CD4-positive, alpha-beta memory T cell (primary cell): ENCODE measurements at regions of chr9 and their contacts with region 1.

Region 1: DNA sequence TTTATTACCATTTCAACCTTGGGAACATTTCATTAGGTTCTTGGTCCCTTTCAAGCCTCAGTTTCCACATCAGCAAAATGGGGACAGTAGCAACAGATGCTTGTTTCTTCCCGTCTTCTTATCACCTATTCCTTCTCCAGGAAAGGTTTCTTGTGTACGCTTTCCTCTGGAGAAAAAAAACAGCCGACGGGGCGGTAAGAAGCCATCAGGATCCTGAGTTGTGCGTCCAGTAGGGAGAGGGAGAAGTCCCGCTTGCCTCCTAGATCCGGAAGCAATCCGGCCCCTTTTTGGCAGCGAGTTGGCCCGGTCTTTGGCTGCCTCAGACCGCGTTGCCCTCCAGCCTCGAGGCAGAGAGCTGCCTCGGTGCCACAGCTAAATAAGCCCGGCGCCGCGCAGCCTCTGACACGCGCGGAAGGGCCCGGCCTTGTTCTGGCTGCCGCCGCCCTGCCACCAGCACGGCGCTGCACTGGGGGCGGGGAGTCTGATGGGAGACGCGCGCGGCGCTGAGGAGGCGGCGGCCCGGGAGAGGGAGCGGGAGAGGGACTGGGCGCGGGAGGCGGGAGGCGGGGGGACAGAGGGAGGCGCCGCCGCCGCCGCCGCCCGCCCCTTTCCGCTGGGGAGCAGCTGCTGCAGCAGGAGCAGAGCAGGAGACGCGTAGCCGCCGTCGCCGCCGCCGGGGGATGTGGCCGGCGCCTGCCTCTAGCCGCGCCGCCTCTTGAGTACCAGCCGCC is at the start of gene SLC44A1:
- DNase-seq: peak; percentile 92 to 94 (median 93)
- H3K4me3 ChIP-seq: peak within 1 kb of the TSS; percentile 18 to 71
- H3K4me3 Mint-ChIP-seq: peak within 1 kb of the TSS; percentile 89 to 95 (median 92)
- H3K27ac ChIP-seq: peak within 1 kb of the TSS; percentile 67
- H3K27ac Mint-ChIP-seq: peak within 1 kb of the TSS; percentile 89 to 96 (median 92)
- H3K4me1 ChIP-seq: peaks cover 20% of the 10 kb centered on the region
- H3K4me1 Mint-ChIP-seq: peaks cover 8 to 49% (median 20%) of the 10 kb centered on the region in 4 donors
- H3K27me3 ChIP-seq: no peaks in the 10 kb centered on the region
- H3K27me3 Mint-ChIP-seq: peaks cover 4% of the 10 kb centered on the region in 2 donors
- total RNA-seq, gene SLC44A1: 13.7 to 15.2 TPM

Region 2: GRCh38 chr9:104747558-104748358 is 496.4 kb before region 1 on chr9 and contains the start of gene NIPSNAP3A:
- CTCF ChIA-PET with region 1: interaction called, 3 read pairs
- POLR2A ChIA-PET with region 1: interaction called, 30 read pairs
- intact Hi-C with region 1: loop called (anchors 1 kb)
- DNase-seq: peak; percentile 85 to 95 (median 90)
- H3K4me3 ChIP-seq: peak within 1 kb of the TSS; percentile 56 to 89
- H3K4me3 Mint-ChIP-seq: peak within 1 kb of the TSS; percentile 91 to 99 (median 98)
- H3K27ac ChIP-seq: peak within 1 kb of the TSS; percentile 85
- H3K27ac Mint-ChIP-seq: peak within 1 kb of the TSS; percentile 90 to 99 (median 99)
- H3K4me1 ChIP-seq: peaks cover 15% of the 10 kb centered on the region
- H3K4me1 Mint-ChIP-seq: peaks cover 10 to 21% (median 17%) of the 10 kb centered on the region in 4 donors
- H3K27me3 ChIP-seq: no peaks in the 10 kb centered on the region
- H3K27me3 Mint-ChIP-seq: no peaks in the 10 kb centered on the region
- total RNA-seq, gene NIPSNAP3A: 11.3 to 13.6 TPM

Region 3: DNA sequence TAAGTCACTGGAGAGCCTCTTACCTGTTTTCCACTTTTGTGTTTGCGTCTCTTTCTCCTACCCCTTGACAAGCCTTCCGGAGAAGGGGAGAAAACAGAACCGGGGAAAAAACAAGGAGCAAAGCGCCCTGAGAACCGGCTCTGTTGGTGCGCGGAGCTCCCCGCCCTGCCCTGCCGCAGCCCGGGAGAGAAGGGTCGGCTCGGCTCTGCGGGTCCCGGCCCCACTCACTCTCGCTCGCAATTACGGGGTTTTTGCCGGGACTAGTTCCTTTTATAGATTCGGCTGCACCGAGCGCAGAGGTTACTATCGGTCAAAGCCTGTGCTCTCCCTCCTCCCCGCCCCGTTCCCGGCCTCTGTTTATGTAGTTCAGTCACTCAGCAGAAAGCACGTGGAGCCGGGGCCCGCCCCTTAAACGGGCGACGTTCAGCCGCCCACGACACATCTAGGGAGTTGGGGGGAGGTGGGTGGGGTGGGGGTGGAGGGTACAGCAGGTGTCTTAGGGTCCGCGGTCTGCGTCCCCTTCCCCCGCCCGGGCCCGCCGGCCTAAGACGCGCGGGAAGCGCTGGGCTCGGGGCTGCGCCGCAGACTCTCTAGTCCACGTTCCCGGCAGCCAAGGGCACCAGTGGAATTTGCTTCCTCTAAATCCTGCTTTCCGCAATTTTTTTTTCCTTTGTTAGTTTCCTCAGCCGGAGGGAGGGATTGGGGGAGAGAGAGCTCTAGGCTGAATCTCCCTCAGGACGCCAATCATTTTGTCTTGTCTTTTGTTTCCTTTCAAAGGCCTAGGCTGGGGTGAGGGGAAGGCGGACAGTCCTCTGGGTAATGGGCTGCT is 316.0 kb before region 1 on chr9 and contains the start of gene ABCA1:
- CTCF ChIA-PET with region 1: no interaction called
- POLR2A ChIA-PET with region 1: interaction called, 11 read pairs
- intact Hi-C with region 1: loop called (anchors 2 kb)
- DNase-seq: peak; percentile 56 to 83 (median 65)
- H3K4me3 ChIP-seq: peak within 1 kb of the TSS; percentile 62 to 69
- H3K4me3 Mint-ChIP-seq: peak within 1 kb of the TSS; percentile 90 to 94 (median 91)
- H3K27ac ChIP-seq: no peak within 1 kb of the TSS
- H3K27ac Mint-ChIP-seq: peak within 1 kb of the TSS in 6 of 7 donors; percentile 60 to 92 (median 80)
- H3K4me1 ChIP-seq: peaks cover 23% of the 10 kb centered on the region
- H3K4me1 Mint-ChIP-seq: peaks cover 4 to 19% (median 10%) of the 10 kb centered on the region in 4 donors
- H3K27me3 ChIP-seq: no peaks in the 10 kb centered on the region
- H3K27me3 Mint-ChIP-seq: peaks cover 0 to 14% of the 10 kb centered on the region in 2 donors
- total RNA-seq, gene ABCA1: 0.80 to 1.2 TPM

Region 4: GRCh38 chr9:104991144-104991953 is 252.8 kb before region 1 on chr9:
- CTCF ChIA-PET with region 1: no interaction called
- POLR2A ChIA-PET with region 1: interaction called, 9 read pairs
- intact Hi-C with region 1: loop called (anchors 5 kb)
- DNase-seq: peak; percentile 85 to 88 (median 88)
- H3K4me3 ChIP-seq: peak overlapping the region; percentile 94 to 98
- H3K4me3 Mint-ChIP-seq: peak overlapping the region; percentile 87 to 94 (median 92)
- H3K27ac ChIP-seq: peak overlapping the region; percentile 76
- H3K27ac Mint-ChIP-seq: peak overlapping the region; percentile 96 to 99 (median 98)
- H3K4me1 ChIP-seq: peaks cover 38% of the 10 kb centered on the region
- H3K4me1 Mint-ChIP-seq: peaks cover 21 to 45% (median 33%) of the 10 kb centered on the region in 4 donors
- H3K27me3 ChIP-seq: no peaks in the 10 kb centered on the region
- H3K27me3 Mint-ChIP-seq: peaks cover 0 to 1% of the 10 kb centered on the region in 2 donors

Region 5: DNA sequence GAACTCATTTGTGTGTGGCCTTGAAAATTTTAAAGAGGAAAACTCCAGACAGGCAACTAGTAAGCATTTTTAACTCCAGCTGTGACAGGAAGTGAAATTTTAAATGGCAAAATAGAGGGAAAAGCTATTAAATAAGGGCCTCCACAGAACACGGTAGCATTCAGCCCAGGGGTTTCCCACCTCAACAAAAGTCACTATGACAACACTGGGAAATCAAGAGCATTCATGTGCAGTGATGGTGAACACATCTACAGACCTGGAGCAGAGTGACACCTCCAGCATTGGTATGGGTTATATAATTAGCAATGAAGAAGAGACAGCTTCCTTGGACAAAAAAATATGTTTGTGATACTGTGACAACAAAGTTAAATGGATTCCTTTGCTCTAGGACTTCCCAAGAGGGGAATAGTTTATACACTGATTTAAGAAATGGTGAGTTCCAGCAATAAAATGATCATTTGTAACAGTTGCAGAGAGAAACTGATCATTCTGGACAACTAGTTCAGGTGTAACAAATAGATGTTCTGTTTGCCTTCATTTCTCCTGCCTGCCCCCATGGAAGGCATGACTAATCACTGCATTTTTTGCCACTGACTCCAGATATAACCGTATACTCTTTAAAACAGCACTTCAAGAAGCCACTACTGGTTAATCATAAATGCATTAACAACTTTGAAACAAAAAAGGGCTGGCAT is 93.0 kb before region 1 on chr9:
- CTCF ChIA-PET with region 1: no interaction called
- POLR2A ChIA-PET with region 1: no interaction called
- intact Hi-C with region 1: no loop called
- DNase-seq: no peak
- H3K4me3 ChIP-seq: no peak overlapping the region
- H3K4me3 Mint-ChIP-seq: no peak overlapping the region
- H3K27ac ChIP-seq: no peak overlapping the region
- H3K27ac Mint-ChIP-seq: no peak overlapping the region
- H3K4me1 ChIP-seq: no peaks in the 10 kb centered on the region
- H3K4me1 Mint-ChIP-seq: peaks cover 0 to 20% (median 12%) of the 10 kb centered on the region in 4 donors
- H3K27me3 ChIP-seq: no peaks in the 10 kb centered on the region
- H3K27me3 Mint-ChIP-seq: peaks cover 0 to 2% of the 10 kb centered on the region in 2 donors

Region 6: DNA sequence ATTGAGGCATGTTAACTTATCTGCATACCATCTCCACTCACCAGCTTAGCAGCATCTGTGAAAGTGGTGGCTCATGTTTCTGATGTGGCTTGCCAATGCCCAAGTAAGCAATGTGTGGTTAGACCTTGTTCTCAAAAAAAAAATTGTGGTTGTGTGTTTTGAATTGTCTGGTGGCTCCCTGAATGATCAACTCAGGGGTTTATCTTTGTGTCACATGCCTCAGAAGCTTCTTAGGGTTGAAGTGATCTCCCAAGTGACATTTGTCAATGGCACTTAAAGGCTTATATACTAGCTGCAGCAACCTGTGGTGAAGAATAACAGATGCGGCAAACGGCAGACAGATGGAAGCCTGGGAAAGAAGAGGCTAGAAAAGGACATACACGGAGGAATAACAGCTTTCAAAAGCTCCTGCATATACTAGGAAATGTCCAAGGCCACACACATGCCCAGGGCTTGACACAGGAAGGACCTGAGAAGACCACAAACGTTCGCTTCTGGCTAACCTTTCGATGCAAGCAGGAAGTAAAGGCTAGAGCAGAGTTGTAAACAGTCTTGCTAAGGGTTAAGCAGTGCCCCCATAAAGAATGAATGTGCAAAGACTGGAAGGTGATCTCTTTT is 161.5 kb after region 1 on chr9:
- CTCF ChIA-PET with region 1: interaction called, 4 read pairs
- POLR2A ChIA-PET with region 1: interaction called, 17 read pairs
- intact Hi-C with region 1: loop called (anchors 1 kb)
- DNase-seq: peak; percentile 73 to 88 (median 86)
- H3K4me3 ChIP-seq: no peak overlapping the region
- H3K4me3 Mint-ChIP-seq: peak overlapping the region; percentile 26 to 82 (median 62)
- H3K27ac ChIP-seq: no peak overlapping the region
- H3K27ac Mint-ChIP-seq: peak overlapping the region in 6 of 7 donors; percentile 38 to 94 (median 88)
- H3K4me1 ChIP-seq: peaks cover 22% of the 10 kb centered on the region
- H3K4me1 Mint-ChIP-seq: peaks cover 29 to 32% (median 29%) of the 10 kb centered on the region in 4 donors
- H3K27me3 ChIP-seq: peaks cover 32% of the 10 kb centered on the region
- H3K27me3 Mint-ChIP-seq: peaks cover 48 to 54% of the 10 kb centered on the region in 2 donors

Region 7: DNA sequence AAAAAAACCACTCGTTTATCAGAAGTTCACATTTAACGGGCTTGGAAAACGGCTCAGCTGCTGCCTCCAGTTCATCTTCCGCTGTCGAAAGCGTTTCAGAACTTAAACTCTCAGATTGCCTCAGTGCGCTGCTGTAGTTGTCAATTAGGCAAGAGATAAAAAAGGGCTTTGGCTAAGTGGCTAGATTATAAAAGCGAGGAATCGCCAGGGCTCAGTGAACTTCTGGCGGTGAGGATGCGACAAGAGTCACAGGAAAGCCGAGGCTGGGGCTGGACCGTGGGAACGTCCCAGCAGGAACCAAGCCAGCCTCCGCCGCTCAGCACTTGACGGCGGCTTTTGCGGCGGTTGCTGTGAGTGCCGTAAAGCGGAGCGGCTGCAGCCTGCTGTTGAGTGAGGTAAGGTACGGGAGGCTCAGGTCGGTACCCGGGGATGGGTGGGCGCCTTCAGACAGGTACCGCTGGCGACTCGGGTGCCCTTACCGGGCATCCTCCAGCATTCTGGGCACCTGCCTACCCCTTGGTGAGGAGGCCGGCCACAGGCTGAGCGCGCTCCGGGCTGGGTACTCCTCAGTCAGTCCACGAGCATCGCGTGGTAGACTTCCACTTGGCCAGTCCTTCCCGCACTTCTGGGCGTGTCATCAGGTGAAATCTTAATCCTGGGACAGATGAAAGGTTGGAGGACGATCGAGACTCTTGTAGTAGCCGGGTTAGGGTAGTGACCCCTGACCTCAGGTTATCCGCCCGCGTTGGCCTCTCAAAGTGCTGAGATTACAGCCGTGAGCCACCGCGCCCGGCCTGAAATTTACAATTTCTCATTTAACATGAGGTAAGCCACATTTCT is 313.8 kb after region 1 on chr9 and contains the start of gene FKTN:
- CTCF ChIA-PET with region 1: no interaction called
- POLR2A ChIA-PET with region 1: no interaction called
- intact Hi-C with region 1: loop called (anchors 5 kb)
- DNase-seq: peak; percentile 81 to 86 (median 83)
- H3K4me3 ChIP-seq: peak within 1 kb of the TSS; percentile 76 to 77
- H3K4me3 Mint-ChIP-seq: peak within 1 kb of the TSS; percentile 89 to 97 (median 96)
- H3K27ac ChIP-seq: peak within 1 kb of the TSS; percentile 46
- H3K27ac Mint-ChIP-seq: peak within 1 kb of the TSS; percentile 74 to 95 (median 90)
- H3K4me1 ChIP-seq: peaks cover 10% of the 10 kb centered on the region
- H3K4me1 Mint-ChIP-seq: peaks cover 14 to 24% (median 20%) of the 10 kb centered on the region in 4 donors
- H3K27me3 ChIP-seq: no peaks in the 10 kb centered on the region
- H3K27me3 Mint-ChIP-seq: no peaks in the 10 kb centered on the region
- total RNA-seq, gene FKTN: 13.9 to 14.2 TPM